ENCODE measurements at regions of chr11 and their contacts with region 1.

Region 1: GRCh38 chr11:102346748-102347461 is at the start of gene BIRC2:
- H3K4me3 Mint-ChIP-seq: peak within 1 kb of the TSS; percentile 88
- H3K27ac Mint-ChIP-seq: peak within 1 kb of the TSS; percentile 94
- H3K4me1 Mint-ChIP-seq: peaks cover 18% of the 10 kb centered on the region
- H3K27me3 Mint-ChIP-seq: no peaks in the 10 kb centered on the region

Region 2: DNA sequence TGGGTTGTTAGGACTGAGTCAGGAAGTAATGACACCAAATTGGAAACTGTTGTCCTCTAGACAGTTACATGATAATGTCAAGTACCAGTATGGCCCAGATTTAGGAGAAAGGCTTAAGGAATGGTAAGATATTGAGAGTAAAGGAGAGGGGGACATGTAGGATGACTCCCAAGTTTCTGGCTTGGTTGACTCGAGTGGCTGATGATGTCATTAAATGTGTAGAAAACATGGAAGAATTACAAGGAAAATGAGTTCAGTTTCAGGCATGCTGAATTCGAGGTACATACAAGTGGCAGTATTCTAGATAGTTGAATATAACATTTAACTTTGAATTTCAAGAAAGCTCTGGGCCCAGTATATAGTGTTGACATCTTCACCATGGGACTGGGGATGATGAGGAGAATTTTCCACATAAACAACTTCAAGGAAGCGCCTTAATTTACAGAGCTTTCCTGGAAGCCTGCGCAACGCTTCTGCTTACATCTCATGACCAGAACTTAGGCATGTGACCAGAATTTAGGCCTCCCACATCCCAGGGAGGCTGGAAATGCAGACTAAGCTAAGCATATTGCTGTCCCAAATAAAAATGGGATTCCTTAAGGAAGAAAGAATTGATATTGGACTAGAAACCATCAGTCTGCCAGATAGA is 295.9 kb before region 1 on chr11:
- intact Hi-C with region 1: no loop called
- H3K4me3 Mint-ChIP-seq: no peak overlapping the region
- H3K27ac Mint-ChIP-seq: no peak overlapping the region
- H3K4me1 Mint-ChIP-seq: no peaks in the 10 kb centered on the region
- H3K27me3 Mint-ChIP-seq: peaks cover 34% of the 10 kb centered on the region

Region 3: DNA sequence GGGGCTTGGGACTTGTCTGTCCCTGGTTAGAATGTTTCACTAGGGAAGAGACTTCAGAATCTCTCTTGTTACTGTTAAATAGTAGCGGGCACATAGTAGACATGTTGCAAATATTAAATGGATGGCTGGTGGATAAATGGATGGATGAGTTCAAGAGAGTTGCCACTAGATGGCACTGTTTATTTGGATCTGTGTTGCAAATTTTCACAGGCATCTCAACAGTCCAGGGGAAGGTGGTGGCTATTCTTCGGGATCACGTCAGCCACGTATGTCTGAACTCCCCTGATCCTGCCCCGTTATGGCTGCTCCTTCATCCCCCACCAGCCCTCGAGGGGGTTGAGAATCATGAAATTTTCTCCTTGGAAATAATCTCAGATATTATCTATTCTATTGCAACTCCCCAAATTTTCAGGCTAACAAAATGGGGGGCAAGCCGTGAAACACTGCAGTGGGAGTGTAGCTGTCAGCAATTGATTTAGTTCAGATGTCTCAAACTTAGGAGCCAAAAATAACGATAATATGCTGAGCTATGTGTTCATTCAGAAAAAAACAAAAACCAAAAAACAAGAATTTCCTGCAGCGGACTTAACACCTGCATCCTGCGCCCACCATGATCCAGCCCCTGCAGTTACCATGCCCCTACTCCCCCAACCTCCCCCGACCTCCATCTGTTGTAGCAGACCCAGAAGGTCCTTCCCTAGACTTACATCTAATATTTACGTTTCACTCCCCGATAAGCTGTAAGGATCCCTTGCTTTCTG is 58.8 kb before region 1 on chr11:
- intact Hi-C with region 1: loop called (anchors 2 kb)
- H3K4me3 Mint-ChIP-seq: no peak overlapping the region
- H3K27ac Mint-ChIP-seq: no peak overlapping the region
- H3K4me1 Mint-ChIP-seq: peaks cover 46% of the 10 kb centered on the region
- H3K27me3 Mint-ChIP-seq: no peaks in the 10 kb centered on the region